ENCODE measurements at regions of chr20 and their contacts with region 1.

Region 1: GRCh38 chr20:57977569-57977968 is 250.9 kb downstream of the ANKRD60 start:
- DNase-seq: no peak
- H3K4me3 ChIP-seq: no peak overlapping the region
- H3K27ac ChIP-seq: peak overlapping the region in 1 of 4 donors; percentile 34
- H3K4me1 ChIP-seq: no peaks in the 10 kb centered on the region
- H3K27me3 ChIP-seq: no peaks in the 10 kb centered on the region
- CTCF ChIP-seq: no peak
- EP300 ChIP-seq: no peak
- POLR2A ChIP-seq: no peak

Region 2: GRCh38 chr20:57941602-57942381 is 35.8 kb before region 1 on chr20:
- intact Hi-C with region 1: loop called (anchors 5 kb)
- DNase-seq: no peak
- H3K4me3 ChIP-seq: no peak overlapping the region
- H3K27ac ChIP-seq: no peak overlapping the region
- H3K4me1 ChIP-seq: peaks cover 0 to 6% (median 0%) of the 10 kb centered on the region in 4 donors
- H3K27me3 ChIP-seq: no peaks in the 10 kb centered on the region
- CTCF ChIP-seq: no peak
- EP300 ChIP-seq: no peak
- POLR2A ChIP-seq: no peak